Activated naive CD4-positive, alpha-beta T cell treated with anti-CD3 and anti-CD28 coated beads, Interleukin-2, amount 10 ng/mL, durations not matched to agents 7 days and 5 days (primary cell): ENCODE measurements at regions of chr13 and their contacts with region 1.

Region 1: DNA sequence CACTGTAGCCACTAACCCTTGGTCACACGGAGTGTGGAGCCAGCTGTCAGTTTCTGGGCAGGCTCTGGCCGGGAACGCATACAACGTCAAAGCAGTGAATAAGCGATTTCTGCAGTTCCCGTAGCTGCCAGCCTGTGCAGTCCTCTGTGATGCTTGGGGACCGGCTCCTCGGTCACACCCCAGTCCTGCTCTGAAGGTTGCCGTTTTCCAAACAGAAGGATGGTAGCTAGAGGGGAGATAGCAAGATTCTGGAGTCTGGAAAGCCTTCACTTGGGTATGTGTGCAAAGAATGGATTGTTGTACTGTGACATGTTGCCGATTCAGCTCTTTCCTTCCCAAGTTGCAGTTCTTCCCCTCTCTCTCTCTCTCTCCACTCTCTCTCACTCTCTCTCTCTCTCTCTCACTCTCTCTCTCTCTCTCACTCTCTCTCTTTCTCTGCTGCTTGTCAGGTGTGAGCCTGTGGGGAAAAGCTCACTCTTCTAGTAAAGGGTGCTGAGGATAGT is 38.7 kb upstream of the C1QTNF9 start:
- DNase-seq: peak; percentile 76
- H3K4me3 Mint-ChIP-seq: peak overlapping the region; percentile 87
- H3K27ac Mint-ChIP-seq: peak overlapping the region; percentile 98
- H3K4me1 Mint-ChIP-seq: peaks cover 94% of the 10 kb centered on the region
- H3K27me3 Mint-ChIP-seq: peaks cover 5% of the 10 kb centered on the region

Region 2: DNA sequence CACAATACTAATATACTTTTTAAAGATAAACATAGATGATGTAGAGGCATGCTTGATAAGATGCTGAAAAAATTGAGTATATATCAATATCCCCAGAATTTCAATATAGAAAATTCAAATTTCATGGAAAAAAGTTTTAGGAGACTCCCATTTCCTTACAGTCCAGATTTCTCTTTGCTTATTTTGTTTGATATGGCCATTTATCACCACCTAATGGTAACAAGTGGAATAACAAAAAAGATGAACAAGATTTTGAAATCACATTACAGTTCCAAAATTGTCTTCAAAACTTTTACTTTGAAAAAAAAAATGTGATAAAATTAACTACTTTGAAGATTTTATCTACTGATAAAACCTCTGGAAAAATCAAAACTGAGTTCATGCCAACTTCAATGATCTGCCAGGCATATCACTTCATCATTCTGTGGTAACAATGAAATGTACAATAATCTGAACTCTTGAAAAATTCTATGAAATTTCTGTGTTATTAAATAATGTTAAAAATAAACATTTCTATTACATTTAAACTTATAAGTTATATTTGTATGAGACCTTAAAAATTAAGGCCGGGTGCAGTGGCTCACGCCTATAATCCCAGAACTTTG is 399.0 kb before region 1 on chr13:
- CTCF ChIA-PET with region 1: no interaction called
- DNase-seq: no peak
- H3K4me3 Mint-ChIP-seq: no peak overlapping the region
- H3K27ac Mint-ChIP-seq: no peak overlapping the region
- H3K4me1 Mint-ChIP-seq: no peaks in the 10 kb centered on the region
- H3K27me3 Mint-ChIP-seq: no peaks in the 10 kb centered on the region

Region 3: GRCh38 chr13:24005755-24006281 is 264.9 kb before region 1 on chr13:
- CTCF ChIA-PET with region 1: no interaction called
- DNase-seq: no peak
- H3K4me3 Mint-ChIP-seq: no peak overlapping the region
- H3K27ac Mint-ChIP-seq: no peak overlapping the region
- H3K4me1 Mint-ChIP-seq: no peaks in the 10 kb centered on the region
- H3K27me3 Mint-ChIP-seq: peaks cover 24% of the 10 kb centered on the region

Region 4: DNA sequence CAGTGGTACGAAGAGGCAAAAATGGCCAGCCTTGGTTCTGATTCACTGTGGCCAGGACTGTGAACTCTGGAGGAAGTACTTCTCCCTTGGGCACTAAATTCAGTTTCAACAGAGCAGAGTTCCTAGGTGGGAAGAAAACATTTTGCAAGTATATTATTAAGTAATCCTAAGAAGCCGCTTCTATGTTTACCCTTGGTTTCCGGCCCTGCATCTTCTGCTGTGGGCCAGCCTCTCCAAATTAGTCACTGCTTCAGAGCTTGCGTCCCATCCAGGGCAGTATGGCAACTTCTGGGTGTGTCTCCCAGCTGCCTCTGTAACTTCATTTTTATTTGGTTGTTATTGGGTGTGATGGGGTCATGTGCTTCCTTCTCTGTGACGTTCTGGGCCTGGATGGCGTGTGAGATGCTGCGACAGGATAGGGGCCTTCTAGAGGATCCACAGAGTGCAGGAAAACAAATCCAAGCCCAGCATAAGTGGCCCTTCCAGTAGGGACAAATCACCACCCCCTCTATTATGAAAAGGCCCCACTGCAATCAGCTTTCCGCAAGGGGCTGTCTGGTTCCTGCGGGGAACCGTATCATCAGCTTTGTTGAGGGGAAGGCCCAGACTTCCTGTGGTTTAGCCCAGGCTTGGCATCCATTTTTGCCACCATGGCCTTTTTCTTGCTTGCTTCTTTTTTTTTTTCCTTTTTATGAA is 16.4 kb before region 1 on chr13:
- CTCF ChIA-PET with region 1: interaction called, 12 read pairs
- DNase-seq: peak; percentile 81
- H3K4me3 Mint-ChIP-seq: peak overlapping the region; percentile 84
- H3K27ac Mint-ChIP-seq: peak overlapping the region; percentile 94
- H3K4me1 Mint-ChIP-seq: peaks cover 83% of the 10 kb centered on the region
- H3K27me3 Mint-ChIP-seq: no peaks in the 10 kb centered on the region